Calu3 (cell line): ENCODE measurements at regions of chr4 and their contacts with region 1.

Region 1: DNA sequence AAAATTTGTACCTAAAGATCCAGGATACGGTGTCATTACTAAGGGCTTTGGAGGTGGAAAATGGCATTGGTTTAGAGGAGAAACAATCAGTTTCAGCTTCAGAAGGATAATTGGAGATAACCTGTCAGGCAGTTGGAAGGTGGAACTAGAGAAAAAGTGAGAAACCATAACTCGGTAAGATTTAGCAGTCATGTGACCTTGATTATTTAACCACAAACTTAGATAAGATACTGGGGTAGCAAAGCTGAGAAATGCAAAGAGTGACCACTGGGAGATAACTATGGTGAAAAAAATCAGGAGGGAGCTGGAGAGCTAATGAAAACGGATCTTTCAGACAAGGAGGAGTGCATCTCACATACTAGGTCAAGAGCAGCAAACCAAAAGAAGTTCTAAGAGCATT is 58.3 kb upstream of the SMARCA5 start:
- DNase-seq: no peak
- H3K4me3 Mint-ChIP-seq: no peak overlapping the region
- H3K27ac Mint-ChIP-seq: no peak overlapping the region
- H3K4me1 Mint-ChIP-seq: peaks cover 10% of the 10 kb centered on the region
- H3K27me3 Mint-ChIP-seq: no peaks in the 10 kb centered on the region
- CTCF ChIP-seq: no peak

Region 2: DNA sequence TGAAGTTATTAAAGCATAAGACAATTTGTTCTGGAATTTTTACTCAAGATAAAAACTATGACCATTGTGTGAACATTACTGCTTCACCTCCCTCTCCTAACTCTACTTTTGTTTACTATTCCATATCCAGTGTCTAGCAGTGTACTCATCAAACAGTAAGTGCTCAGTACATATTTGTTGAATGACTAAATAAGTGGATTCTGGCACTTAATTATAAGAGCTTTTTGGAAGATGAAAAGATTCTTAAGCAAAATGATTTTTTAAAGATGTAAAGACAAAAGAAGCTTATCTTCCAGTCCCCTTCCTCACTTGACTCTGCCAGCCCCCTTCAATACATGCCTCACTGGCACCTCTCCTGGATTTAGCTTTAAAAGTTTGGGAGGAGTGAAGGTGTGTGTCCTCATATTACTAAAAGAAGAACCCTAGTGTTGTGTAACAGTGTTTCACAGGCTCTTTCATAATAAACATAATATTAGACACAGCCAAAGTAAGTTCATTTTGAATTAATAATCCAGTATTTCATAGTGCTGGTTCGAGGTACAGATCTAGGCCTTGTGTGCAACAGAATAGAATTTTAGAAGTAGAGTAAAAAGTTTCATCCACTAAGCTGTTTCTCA is 65.5 kb before region 1 on chr4:
- CTCF ChIA-PET with region 1: no interaction called
- intact Hi-C with region 1: loop called (anchors 2 kb)
- DNase-seq: no peak
- H3K4me3 Mint-ChIP-seq: no peak overlapping the region
- H3K27ac Mint-ChIP-seq: no peak overlapping the region
- H3K4me1 Mint-ChIP-seq: peaks cover 14% of the 10 kb centered on the region
- H3K27me3 Mint-ChIP-seq: no peaks in the 10 kb centered on the region
- CTCF ChIP-seq: no peak

Region 3: GRCh38 chr4:143431526-143432257 is 23.5 kb before region 1 on chr4:
- CTCF ChIA-PET with region 1: no interaction called
- intact Hi-C with region 1: no loop called
- DNase-seq: no peak
- H3K4me3 Mint-ChIP-seq: no peak overlapping the region
- H3K27ac Mint-ChIP-seq: no peak overlapping the region
- H3K4me1 Mint-ChIP-seq: no peaks in the 10 kb centered on the region
- H3K27me3 Mint-ChIP-seq: no peaks in the 10 kb centered on the region
- CTCF ChIP-seq: no peak